ENCODE measurements at regions of chr3 and their contacts with region 1.

Region 1: GRCh38 chr3:42547401-42547945 is 34.3 kb downstream of the SEC22C start:
- DNase-seq: peak; percentile 65 to 82 (median 68)
- ATAC-seq: peak; percentile 40 to 64 (median 50)
- H3K4me3 ChIP-seq: no peak overlapping the region
- H3K27ac ChIP-seq: peak overlapping the region in 5 of 12 donors; percentile 2 to 54 (median 26)
- H3K4me1 ChIP-seq: peaks cover 0 to 28% (median 8%) of the 10 kb centered on the region in 12 donors
- H3K27me3 ChIP-seq: no peaks in the 10 kb centered on the region
- CTCF ChIP-seq: peak; percentile 85 to 99 (median 94)
- POLR2A ChIP-seq: no peak

Region 2: GRCh38 chr3:41893977-41894376 is 653.5 kb before region 1 on chr3:
- intact Hi-C with region 1: loop called in 4 of 10 experiments (anchors 10 kb)
- DNase-seq: peak in 1 of 5 donors; percentile 12
- ATAC-seq: no peak
- H3K4me3 ChIP-seq: no peak overlapping the region
- H3K27ac ChIP-seq: no peak overlapping the region
- H3K4me1 ChIP-seq: peaks cover 0 to 7% (median 0%) of the 10 kb centered on the region in 12 donors
- H3K27me3 ChIP-seq: no peaks in the 10 kb centered on the region
- CTCF ChIP-seq: peak; percentile 31 to 71 (median 63)
- POLR2A ChIP-seq: no peak

Region 3: GRCh38 chr3:42229942-42230688 is 317.4 kb before region 1 on chr3:
- intact Hi-C with region 1: loop called in 5 of 10 experiments (anchors 5 to 10 kb)
- DNase-seq: no peak
- ATAC-seq: peak in 2 of 4 donors; percentile 12 to 42
- H3K4me3 ChIP-seq: peak overlapping the region in 1 of 12 donors; percentile 29
- H3K27ac ChIP-seq: no peak overlapping the region
- H3K4me1 ChIP-seq: peaks cover 0 to 8% (median 0%) of the 10 kb centered on the region in 12 donors
- H3K27me3 ChIP-seq: peaks cover 0 to 4% (median 0%) of the 10 kb centered on the region in 9 donors
- CTCF ChIP-seq: peak in 10 of 12 donors; percentile 28 to 66 (median 54)
- POLR2A ChIP-seq: no peak

Region 4: GRCh38 chr3:42247576-42248027 is 299.9 kb before region 1 on chr3:
- intact Hi-C with region 1: loop called in 7 of 10 experiments (anchors 2 to 5 kb)
- DNase-seq: peak in 1 of 5 donors; percentile 41
- ATAC-seq: peak in 3 of 4 donors; percentile 45 to 58 (median 47)
- H3K4me3 ChIP-seq: no peak overlapping the region
- H3K27ac ChIP-seq: no peak overlapping the region
- H3K4me1 ChIP-seq: no peaks in the 10 kb centered on the region
- H3K27me3 ChIP-seq: peaks cover 0 to 8% (median 3%) of the 10 kb centered on the region in 9 donors
- CTCF ChIP-seq: peak; percentile 62 to 81 (median 70)
- POLR2A ChIP-seq: no peak

Region 5: GRCh38 chr3:42486814-42487565 is 60.5 kb before region 1 on chr3:
- intact Hi-C with region 1: no loop called
- DNase-seq: peak in 1 of 5 donors; percentile 11
- ATAC-seq: no peak
- H3K4me3 ChIP-seq: no peak overlapping the region
- H3K27ac ChIP-seq: no peak overlapping the region
- H3K4me1 ChIP-seq: peaks cover 0 to 38% (median 8%) of the 10 kb centered on the region in 12 donors
- H3K27me3 ChIP-seq: no peaks in the 10 kb centered on the region
- CTCF ChIP-seq: no peak
- POLR2A ChIP-seq: no peak

Region 6: GRCh38 chr3:42502429-42503250 is 44.8 kb before region 1 on chr3 and contains the start of gene VIPR1:
- intact Hi-C with region 1: loop called in 3 of 10 experiments (anchors 5 kb)
- DNase-seq: peak; percentile 65 to 92 (median 81)
- ATAC-seq: peak; percentile 87 to 93 (median 91)
- H3K4me3 ChIP-seq: peak within 1 kb of the TSS; percentile 13 to 63 (median 48)
- H3K27ac ChIP-seq: peak within 1 kb of the TSS in 5 of 12 donors; percentile 8 to 66 (median 43)
- H3K4me1 ChIP-seq: peaks cover 0 to 28% (median 12%) of the 10 kb centered on the region in 12 donors
- H3K27me3 ChIP-seq: peaks cover 0 to 34% (median 8%) of the 10 kb centered on the region in 9 donors
- CTCF ChIP-seq: no peak
- POLR2A ChIP-seq: no peak
- total RNA-seq, gene VIPR1: 0.96 to 5.4 (median 1.7) TPM

Region 7: DNA sequence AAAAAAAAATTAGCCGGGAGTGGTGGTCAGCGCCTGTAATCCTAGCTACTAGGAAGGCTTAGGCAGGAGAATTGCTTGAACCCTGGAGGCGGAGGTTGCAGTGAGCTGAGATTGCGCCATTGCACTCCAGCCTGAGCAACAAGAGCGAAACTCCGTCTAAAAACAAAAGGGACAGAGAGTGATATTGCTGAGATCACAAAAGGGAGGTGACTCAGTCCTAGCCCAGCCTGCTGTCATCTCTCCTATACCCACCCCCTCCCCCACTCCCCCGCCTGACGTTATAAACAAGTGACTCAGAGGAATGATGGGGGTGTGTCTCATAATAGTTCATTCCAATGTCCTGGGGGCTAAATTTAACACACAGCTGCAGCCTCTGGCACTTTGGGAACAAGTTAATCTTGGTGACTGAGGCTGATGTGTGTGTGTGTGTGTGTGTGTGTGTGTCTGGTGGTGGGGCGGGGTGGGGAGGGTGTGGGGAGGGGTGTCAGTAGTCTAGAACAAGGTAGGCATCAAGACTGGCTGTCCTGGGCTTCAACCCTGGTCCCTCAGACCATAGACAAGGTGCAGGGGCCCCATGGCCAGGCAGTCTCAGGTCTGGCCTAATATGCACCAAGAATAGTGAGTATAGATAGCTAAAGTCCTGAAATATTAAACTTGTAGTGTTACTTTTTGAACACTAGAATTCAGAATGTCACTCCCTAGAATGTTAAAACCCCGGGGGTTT is 136.6 kb after region 1 on chr3:
- intact Hi-C with region 1: no loop called
- DNase-seq: peak; percentile 65 to 89 (median 81)
- ATAC-seq: peak; percentile 89 to 93 (median 91)
- H3K4me3 ChIP-seq: peak overlapping the region in 1 of 12 donors; percentile 26
- H3K27ac ChIP-seq: peak overlapping the region; percentile 78 to 96 (median 90)
- H3K4me1 ChIP-seq: peaks cover 0 to 25% (median 8%) of the 10 kb centered on the region in 12 donors
- H3K27me3 ChIP-seq: peaks cover 0 to 6% (median 0%) of the 10 kb centered on the region in 9 donors
- CTCF ChIP-seq: no peak
- POLR2A ChIP-seq: peak in 1 of 2 donors; percentile 16

Region 8: DNA sequence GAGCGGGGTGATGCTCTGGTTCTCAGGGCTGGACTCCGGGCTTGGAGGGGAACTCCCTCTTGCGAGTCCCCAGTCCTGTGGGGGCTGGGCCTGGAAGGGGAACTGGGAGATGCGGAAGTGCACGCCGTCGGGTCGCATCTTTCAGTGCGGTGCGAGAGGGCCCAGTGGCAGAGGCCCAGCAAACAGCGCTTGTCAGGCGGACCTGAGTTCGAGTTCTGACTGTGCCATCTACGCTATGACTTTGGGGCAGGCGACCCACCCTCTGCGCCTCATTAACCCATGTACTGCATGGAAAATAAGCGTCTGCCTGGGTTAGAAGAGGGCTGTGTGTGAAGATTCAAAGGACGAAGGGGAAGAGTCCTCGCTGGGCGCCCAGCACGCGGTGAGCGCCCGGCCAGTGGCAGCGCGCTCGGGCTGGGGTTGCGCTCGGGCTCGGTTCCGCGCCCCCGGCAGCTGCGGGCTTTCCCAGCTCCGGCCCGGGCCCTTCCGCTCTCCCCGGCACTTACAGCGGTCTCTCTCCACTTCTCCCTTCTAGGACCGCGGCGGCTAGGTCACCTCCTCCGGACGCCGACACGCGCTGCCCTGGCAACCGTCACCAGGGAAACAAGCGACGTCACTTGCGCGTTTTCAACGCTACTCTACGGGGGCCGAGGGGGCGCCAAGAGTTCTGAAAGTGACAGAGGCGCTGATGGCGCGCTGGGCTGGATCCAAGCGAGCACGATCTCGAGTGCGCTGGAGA is 225.4 kb after region 1 on chr3 and contains the start of gene CCDC13:
- intact Hi-C with region 1: no loop called
- DNase-seq: peak; percentile 97 to 98 (median 98)
- ATAC-seq: peak; percentile 95 to 99 (median 97)
- H3K4me3 ChIP-seq: peak within 1 kb of the TSS; percentile 15 to 73 (median 56)
- H3K27ac ChIP-seq: peak within 1 kb of the TSS in 11 of 12 donors; percentile 33 to 94 (median 64)
- H3K4me1 ChIP-seq: peaks cover 0 to 16% (median 9%) of the 10 kb centered on the region in 12 donors
- H3K27me3 ChIP-seq: no peaks in the 10 kb centered on the region
- CTCF ChIP-seq: peak in 1 of 12 donors; percentile 15
- POLR2A ChIP-seq: peak in 1 of 2 donors; percentile 46
- total RNA-seq, gene CCDC13: 0.44 to 1.4 (median 0.83) TPM in 8 of 9 donors, not detected in the other

Measured in heart left ventricle (tissue), 16 donors.